PC-3 (cell line): ENCODE measurements at regions of chr5 and their contacts with region 1.

Region 1: DNA sequence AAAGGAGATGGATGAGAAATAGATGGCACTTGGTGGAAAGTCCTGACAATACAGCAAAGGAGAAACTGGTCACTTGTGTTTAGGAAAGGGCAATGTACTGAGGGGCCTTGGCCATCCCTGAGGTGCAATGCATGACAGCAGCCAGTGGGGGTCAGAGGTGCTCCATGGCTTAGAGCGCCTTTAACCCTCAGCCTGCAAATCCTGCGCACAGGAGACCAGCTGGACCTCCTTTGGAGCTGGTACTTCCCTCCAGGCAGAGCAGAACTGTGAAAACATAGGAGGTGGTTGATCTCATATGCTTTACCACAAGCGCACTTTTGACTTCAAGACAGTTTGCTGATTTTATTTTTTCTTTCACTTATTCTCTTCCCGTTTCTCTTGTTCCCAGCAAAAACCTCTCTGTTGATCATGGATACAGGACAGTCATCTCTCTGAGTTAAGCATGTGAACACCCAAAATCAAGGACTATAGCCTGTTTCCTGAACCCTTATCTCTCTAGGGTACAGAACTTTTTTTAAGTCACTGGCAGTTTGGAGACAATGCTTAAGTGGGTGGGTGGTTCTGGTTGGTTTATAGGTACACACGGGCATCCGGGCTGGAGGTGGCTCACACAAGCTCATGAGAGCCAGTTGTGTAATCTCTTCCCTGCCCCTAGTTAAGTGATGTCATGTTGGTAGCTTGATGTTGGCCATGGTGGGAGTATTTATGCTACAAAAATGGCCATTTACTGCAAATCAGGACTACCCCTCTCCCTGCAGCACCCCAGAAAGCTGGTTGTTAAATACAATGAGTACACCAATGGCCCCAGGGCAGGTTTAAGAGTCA is 37.6 kb upstream of the ANKRD55 start:
- DNase-seq: peak; percentile 77
- ATAC-seq: peak; percentile 96
- H3K4me3 ChIP-seq: no peak overlapping the region
- H3K27ac ChIP-seq: no peak overlapping the region
- H3K4me1 ChIP-seq: peaks cover 4% of the 10 kb centered on the region; the same call in 1 of the 2 replicates
- H3K27me3 ChIP-seq: no peaks in the 10 kb centered on the region
- CTCF ChIP-seq: peak; percentile 84

Region 2: GRCh38 chr5:56388229-56389010 is 117.6 kb after region 1 on chr5:
- CTCF ChIA-PET with region 1: no interaction called
- POLR2A ChIA-PET with region 1: no interaction called
- intact Hi-C with region 1: loop called (anchors 1 kb)
- DNase-seq: no peak
- ATAC-seq: no peak
- H3K4me3 ChIP-seq: no peak overlapping the region
- H3K27ac ChIP-seq: no peak overlapping the region
- H3K4me1 ChIP-seq: no peaks in the 10 kb centered on the region
- H3K27me3 ChIP-seq: no peaks in the 10 kb centered on the region
- CTCF ChIP-seq: no peak

Region 3: GRCh38 chr5:56479696-56480077 is 208.9 kb after region 1 on chr5:
- CTCF ChIA-PET with region 1: no interaction called
- POLR2A ChIA-PET with region 1: no interaction called
- intact Hi-C with region 1: loop called (anchors 10 kb)
- DNase-seq: no peak
- ATAC-seq: no peak
- H3K4me3 ChIP-seq: no peak overlapping the region
- H3K27ac ChIP-seq: no peak overlapping the region
- H3K4me1 ChIP-seq: peaks cover 4% of the 10 kb centered on the region; the same call in 1 of the 2 replicates
- H3K27me3 ChIP-seq: no peaks in the 10 kb centered on the region
- CTCF ChIP-seq: no peak

Region 4: DNA sequence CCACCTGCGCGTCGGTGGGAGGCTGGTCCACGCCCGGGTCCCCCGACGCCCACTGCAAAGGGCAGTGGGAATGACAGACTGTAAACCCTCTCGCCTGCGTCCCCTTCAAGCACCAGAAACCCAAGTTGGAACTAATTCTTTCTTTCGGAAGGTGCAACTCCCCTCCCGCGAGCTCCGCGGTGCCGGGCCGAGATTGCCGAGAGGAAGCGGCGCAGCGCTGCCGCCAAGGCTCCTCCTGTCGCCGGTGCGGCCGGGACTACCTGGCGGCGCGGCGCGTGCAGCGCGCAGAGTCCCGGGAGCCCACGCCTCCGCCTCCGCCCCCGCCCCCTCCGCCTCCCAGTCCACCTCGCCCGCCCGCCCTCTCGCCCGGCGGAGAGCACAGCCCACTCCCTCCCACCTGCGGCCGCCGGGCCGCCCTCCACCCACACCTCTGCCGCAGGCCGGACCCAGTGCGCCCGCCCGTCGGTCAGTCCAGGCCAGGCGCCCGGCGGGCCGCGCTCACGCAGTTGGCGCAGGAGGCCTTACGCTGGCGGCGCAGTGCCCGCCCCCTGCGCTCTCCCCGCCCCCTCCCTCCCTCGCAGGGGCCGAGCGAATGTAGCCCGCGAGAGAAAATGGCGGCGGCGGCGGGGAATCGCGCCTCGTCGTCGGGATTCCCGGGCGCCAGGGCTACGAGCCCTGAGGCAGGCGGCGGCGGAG is 544.3 kb after region 1 on chr5 and contains the start of gene MAP3K1:
- CTCF ChIA-PET with region 1: no interaction called
- POLR2A ChIA-PET with region 1: no interaction called
- intact Hi-C with region 1: loop called (anchors 5 kb)
- DNase-seq: peak; percentile 76
- ATAC-seq: peak; percentile 74
- H3K4me3 ChIP-seq: peak within 1 kb of the TSS; percentile 69
- H3K27ac ChIP-seq: peak within 1 kb of the TSS; percentile 43; the same call in 1 of the 2 replicates
- H3K4me1 ChIP-seq: peaks cover 6% of the 10 kb centered on the region
- H3K27me3 ChIP-seq: no peaks in the 10 kb centered on the region
- CTCF ChIP-seq: no peak
- total RNA-seq, gene MAP3K1: 4.2 and 5.7 TPM in 2 replicates

Region 5: GRCh38 chr5:56838409-56839039 is 567.7 kb after region 1 on chr5:
- CTCF ChIA-PET with region 1: interaction called, 36 read pairs
- POLR2A ChIA-PET with region 1: interaction called, 3 read pairs
- intact Hi-C with region 1: loop called (anchors 1 kb)
- DNase-seq: peak; percentile 64
- ATAC-seq: peak; percentile 51
- H3K4me3 ChIP-seq: peak overlapping the region; percentile 54
- H3K27ac ChIP-seq: no peak overlapping the region
- H3K4me1 ChIP-seq: no peaks in the 10 kb centered on the region; the same call in 1 of the 2 replicates
- H3K27me3 ChIP-seq: no peaks in the 10 kb centered on the region
- CTCF ChIP-seq: peak; percentile 68

Region 6: GRCh38 chr5:57277085-57277484 is 1006.3 kb after region 1 on chr5:
- CTCF ChIA-PET with region 1: no interaction called
- POLR2A ChIA-PET with region 1: no interaction called
- intact Hi-C with region 1: loop called (anchors 2 kb)
- DNase-seq: peak; percentile 50
- ATAC-seq: no peak
- H3K4me3 ChIP-seq: no peak overlapping the region
- H3K27ac ChIP-seq: no peak overlapping the region
- H3K4me1 ChIP-seq: no peaks in the 10 kb centered on the region
- H3K27me3 ChIP-seq: no peaks in the 10 kb centered on the region
- CTCF ChIP-seq: peak; percentile 55